ENCODE measurements at regions of chr11 and their contacts with region 1.

Region 1: GRCh38 chr11:10307442-10308207 is 2.8 kb downstream of the ADM start:
- DNase-seq: peak; percentile 67 to 92 (median 81)
- ATAC-seq: peak; percentile 62
- H3K4me3 ChIP-seq: peak overlapping the region; percentile 83 to 91
- H3K4me3 Mint-ChIP-seq: peak overlapping the region; percentile 95
- H3K27ac ChIP-seq: no peak overlapping the region
- H3K27ac Mint-ChIP-seq: no peak overlapping the region
- H3K4me1 ChIP-seq: peaks cover 43% of the 10 kb centered on the region
- H3K4me1 Mint-ChIP-seq: peaks cover 38% of the 10 kb centered on the region
- H3K27me3 ChIP-seq: peaks cover 16 to 30% of the 10 kb centered on the region in 2 experiments
- H3K27me3 Mint-ChIP-seq: peaks cover 40% of the 10 kb centered on the region
- CTCF ChIP-seq: peak; percentile 98

Region 2: DNA sequence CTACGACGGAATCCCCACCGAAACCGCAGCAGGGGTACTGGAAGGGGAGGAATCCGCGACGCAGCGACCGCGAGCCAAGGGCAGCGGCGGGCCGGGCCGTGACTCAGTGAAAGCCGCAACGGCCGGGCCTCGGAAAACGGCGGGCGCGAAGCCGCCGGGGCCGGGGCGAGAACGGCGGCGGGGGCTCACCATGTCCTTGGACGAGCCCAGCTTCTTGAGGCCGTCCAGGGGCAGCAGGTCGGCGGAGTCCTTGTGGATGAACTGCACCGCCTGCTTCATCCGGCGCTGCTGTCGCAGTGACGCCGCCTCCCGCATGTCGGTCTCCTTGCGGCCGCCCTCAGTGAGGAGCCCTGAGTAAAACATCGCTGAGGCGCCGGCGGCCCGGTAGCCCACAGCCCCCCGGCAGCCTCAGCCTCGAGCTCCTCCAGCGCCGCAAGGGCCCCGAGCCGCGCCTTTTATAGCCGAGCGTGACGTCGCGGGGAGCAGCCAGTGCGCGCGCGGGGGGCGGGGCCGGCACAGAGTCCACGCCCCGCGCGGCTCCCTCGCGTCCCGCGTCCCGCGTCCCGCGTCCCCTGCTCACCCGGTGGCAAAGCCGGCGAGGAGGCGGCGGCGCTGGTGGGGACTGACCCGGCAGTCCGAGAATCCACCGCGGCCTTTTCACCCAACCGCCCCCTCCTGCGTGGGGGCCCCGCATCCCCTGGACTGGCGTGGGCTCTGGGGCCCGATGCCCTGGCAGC is 1303.9 kb before region 1 on chr11 and contains the start of gene NRIP3:
- CTCF ChIA-PET with region 1: no interaction called
- POLR2A ChIA-PET with region 1: no interaction called
- intact Hi-C with region 1: loop called in 1 of 2 experiments (anchors 10 kb)
- DNase-seq: peak; percentile 58 to 91 (median 82)
- ATAC-seq: peak; percentile 92
- H3K4me3 ChIP-seq: peak within 1 kb of the TSS; percentile 47 to 66
- H3K4me3 Mint-ChIP-seq: peak within 1 kb of the TSS; percentile 76
- H3K27ac ChIP-seq: no peak within 1 kb of the TSS
- H3K27ac Mint-ChIP-seq: peak within 1 kb of the TSS; percentile 24
- H3K4me1 ChIP-seq: peaks cover 10% of the 10 kb centered on the region
- H3K4me1 Mint-ChIP-seq: peaks cover 15% of the 10 kb centered on the region
- H3K27me3 ChIP-seq: peaks cover 7 to 24% of the 10 kb centered on the region in 2 experiments
- H3K27me3 Mint-ChIP-seq: peaks cover 32% of the 10 kb centered on the region
- CTCF ChIP-seq: no peak
- total RNA-seq, gene NRIP3: 8.8 to 10.1 TPM

Region 3: DNA sequence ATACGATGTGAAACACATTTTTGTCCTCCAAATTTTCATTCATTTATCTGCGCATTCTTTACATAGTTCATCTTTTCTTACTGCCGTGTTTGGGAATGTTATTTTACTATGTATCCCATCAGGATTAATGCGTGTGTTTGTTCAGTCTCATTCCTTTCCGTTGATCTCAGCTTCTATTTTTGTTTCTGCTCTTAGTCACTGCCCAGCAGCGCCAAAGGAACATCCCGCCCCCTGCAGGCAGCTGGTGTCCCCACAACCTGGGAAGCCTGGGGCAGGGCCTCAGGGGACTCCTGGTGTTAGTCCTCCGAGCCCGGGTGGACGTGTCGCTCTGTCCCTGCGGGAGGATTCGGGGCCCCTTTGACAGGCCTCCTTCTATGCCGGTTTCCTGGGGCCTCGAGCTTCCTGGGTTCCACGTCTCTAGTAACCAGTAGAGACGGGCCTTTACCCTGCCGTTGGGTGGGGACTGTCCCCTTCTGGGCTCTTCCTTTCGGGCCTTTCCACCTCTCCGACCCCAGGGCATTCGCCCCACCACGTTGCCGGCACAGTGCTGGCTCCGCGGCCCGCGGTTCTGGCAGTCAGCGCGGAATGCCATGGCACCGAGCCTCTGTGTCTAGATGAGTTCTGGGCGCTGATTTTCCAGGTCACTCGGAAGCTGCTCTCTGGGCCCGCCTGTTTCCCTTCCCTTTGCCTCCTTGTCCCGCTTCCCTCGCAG is 694.4 kb before region 1 on chr11:
- CTCF ChIA-PET with region 1: no interaction called
- POLR2A ChIA-PET with region 1: no interaction called
- intact Hi-C with region 1: loop called (anchors 1 to 5 kb)
- DNase-seq: peak; percentile 70 to 90 (median 84)
- ATAC-seq: peak; percentile 49
- H3K4me3 ChIP-seq: peak overlapping the region; percentile 69 to 70
- H3K4me3 Mint-ChIP-seq: peak overlapping the region; percentile 97
- H3K27ac ChIP-seq: peak overlapping the region; percentile 49 to 88
- H3K27ac Mint-ChIP-seq: peak overlapping the region; percentile 94
- H3K4me1 ChIP-seq: peaks cover 12% of the 10 kb centered on the region
- H3K4me1 Mint-ChIP-seq: peaks cover 16% of the 10 kb centered on the region
- H3K27me3 ChIP-seq: no peaks in the 10 kb centered on the region
- H3K27me3 Mint-ChIP-seq: no peaks in the 10 kb centered on the region
- CTCF ChIP-seq: peak; percentile 79

Region 4: DNA sequence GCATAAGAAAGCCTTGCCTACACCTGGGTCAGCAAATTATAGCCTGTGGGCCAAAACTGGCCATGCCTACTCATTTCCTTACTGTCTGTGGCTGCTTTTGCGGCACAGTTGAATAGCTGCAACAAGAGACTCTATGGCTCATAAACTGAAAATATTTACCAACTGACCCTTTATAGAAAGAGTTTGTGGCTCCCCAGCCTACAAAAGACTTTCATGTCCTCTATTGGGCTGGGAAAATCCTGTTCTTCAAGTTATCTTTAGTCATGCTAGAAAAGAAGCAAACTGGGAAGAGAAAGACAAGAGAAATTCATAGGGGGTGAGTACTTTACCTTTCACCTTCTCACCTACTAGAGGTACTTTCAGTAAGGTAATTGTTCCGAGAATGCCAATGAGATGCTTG is 468.7 kb before region 1 on chr11:
- CTCF ChIA-PET with region 1: no interaction called
- POLR2A ChIA-PET with region 1: no interaction called
- intact Hi-C with region 1: no loop called
- DNase-seq: no peak
- ATAC-seq: no peak
- H3K4me3 ChIP-seq: no peak overlapping the region
- H3K4me3 Mint-ChIP-seq: no peak overlapping the region
- H3K27ac ChIP-seq: no peak overlapping the region
- H3K27ac Mint-ChIP-seq: no peak overlapping the region
- H3K4me1 ChIP-seq: peaks cover 25% of the 10 kb centered on the region
- H3K4me1 Mint-ChIP-seq: peaks cover 31% of the 10 kb centered on the region
- H3K27me3 ChIP-seq: no peaks in the 10 kb centered on the region
- H3K27me3 Mint-ChIP-seq: no peaks in the 10 kb centered on the region
- CTCF ChIP-seq: no peak

Region 5: GRCh38 chr11:10208131-10208575 is 99.5 kb before region 1 on chr11:
- CTCF ChIA-PET with region 1: interaction called, 253 read pairs
- POLR2A ChIA-PET with region 1: interaction called, 5 read pairs
- intact Hi-C with region 1: loop called (anchors 1 kb)
- DNase-seq: peak in 2 of 9 experiments; percentile 58 to 70
- ATAC-seq: peak; percentile 67
- H3K4me3 ChIP-seq: no peak overlapping the region
- H3K4me3 Mint-ChIP-seq: no peak overlapping the region
- H3K27ac ChIP-seq: no peak overlapping the region
- H3K27ac Mint-ChIP-seq: no peak overlapping the region
- H3K4me1 ChIP-seq: no peaks in the 10 kb centered on the region
- H3K4me1 Mint-ChIP-seq: no peaks in the 10 kb centered on the region
- H3K27me3 ChIP-seq: no peaks in the 10 kb centered on the region
- H3K27me3 Mint-ChIP-seq: no peaks in the 10 kb centered on the region
- CTCF ChIP-seq: peak; percentile 72

Region 6: GRCh38 chr11:10317776-10318526 is 10.3 kb after region 1 on chr11:
- CTCF ChIA-PET with region 1: interaction called, 53 read pairs
- POLR2A ChIA-PET with region 1: no interaction called
- intact Hi-C with region 1: no loop called
- DNase-seq: no peak
- ATAC-seq: no peak
- H3K4me3 ChIP-seq: no peak overlapping the region
- H3K4me3 Mint-ChIP-seq: no peak overlapping the region
- H3K27ac ChIP-seq: no peak overlapping the region
- H3K27ac Mint-ChIP-seq: no peak overlapping the region
- H3K4me1 ChIP-seq: no peaks in the 10 kb centered on the region
- H3K4me1 Mint-ChIP-seq: peaks cover 2% of the 10 kb centered on the region
- H3K27me3 ChIP-seq: peaks cover 0 to 5% of the 10 kb centered on the region in 2 experiments
- H3K27me3 Mint-ChIP-seq: peaks cover 8% of the 10 kb centered on the region
- CTCF ChIP-seq: no peak

Region 7: GRCh38 chr11:10413268-10413667 is 105.6 kb after region 1 on chr11:
- CTCF ChIA-PET with region 1: no interaction called
- POLR2A ChIA-PET with region 1: no interaction called
- intact Hi-C with region 1: no loop called
- DNase-seq: peak in 8 of 9 experiments; percentile 20 to 81 (median 53)
- ATAC-seq: peak; percentile 93
- H3K4me3 ChIP-seq: no peak overlapping the region
- H3K4me3 Mint-ChIP-seq: no peak overlapping the region
- H3K27ac ChIP-seq: no peak overlapping the region
- H3K27ac Mint-ChIP-seq: no peak overlapping the region
- H3K4me1 ChIP-seq: peaks cover 29% of the 10 kb centered on the region
- H3K4me1 Mint-ChIP-seq: peaks cover 40% of the 10 kb centered on the region
- H3K27me3 ChIP-seq: no peaks in the 10 kb centered on the region
- H3K27me3 Mint-ChIP-seq: no peaks in the 10 kb centered on the region
- CTCF ChIP-seq: peak; percentile 51

Region 8: GRCh38 chr11:10735481-10736475 is 428.2 kb after region 1 on chr11:
- CTCF ChIA-PET with region 1: no interaction called
- POLR2A ChIA-PET with region 1: no interaction called
- intact Hi-C with region 1: loop called in 1 of 2 experiments (anchors 5 kb)
- DNase-seq: peak; percentile 73 to 91 (median 85)
- ATAC-seq: peak; percentile 99
- H3K4me3 ChIP-seq: peak overlapping the region; percentile 3 to 20
- H3K4me3 Mint-ChIP-seq: peak overlapping the region; percentile 56
- H3K27ac ChIP-seq: no peak overlapping the region
- H3K27ac Mint-ChIP-seq: no peak overlapping the region
- H3K4me1 ChIP-seq: peaks cover 9% of the 10 kb centered on the region
- H3K4me1 Mint-ChIP-seq: peaks cover 13% of the 10 kb centered on the region
- H3K27me3 ChIP-seq: no peaks in the 10 kb centered on the region
- H3K27me3 Mint-ChIP-seq: no peaks in the 10 kb centered on the region
- CTCF ChIP-seq: peak; percentile 96